ENCODE measurements at regions of chr10 and their contacts with region 1.

Region 1: DNA sequence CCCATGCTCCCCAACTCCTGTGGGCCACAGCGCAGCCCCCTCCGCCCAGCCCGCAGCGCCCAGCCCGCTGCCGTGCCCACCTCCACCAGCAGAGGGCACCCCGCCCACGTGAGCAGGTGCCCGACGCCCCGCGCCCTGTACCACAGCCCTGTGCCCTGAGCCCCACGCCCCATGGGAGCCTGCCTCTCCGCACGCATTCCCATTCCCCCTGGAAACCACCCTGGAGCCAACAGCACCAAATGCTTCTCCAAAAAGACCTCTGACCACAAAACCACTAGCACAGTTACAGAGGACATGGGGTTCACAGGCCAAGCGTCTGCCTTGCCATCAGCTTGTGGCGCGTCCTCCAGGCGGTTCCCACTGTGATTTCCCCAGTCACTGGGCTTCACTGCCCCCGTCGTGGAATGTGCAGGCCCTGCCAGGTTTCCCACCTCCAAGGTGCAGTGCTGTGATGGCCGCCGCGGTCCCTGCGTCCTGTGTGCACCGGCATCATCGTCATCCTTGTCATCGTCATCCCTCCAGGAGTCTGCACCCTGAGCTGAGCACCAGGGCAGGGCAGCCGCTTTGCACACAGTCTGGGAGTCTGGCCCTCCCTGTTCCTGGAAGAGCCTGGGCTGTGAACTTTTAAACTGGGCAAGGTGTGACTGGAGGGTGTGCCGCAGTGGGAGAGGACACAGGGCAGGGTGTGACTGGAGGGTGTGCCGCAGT is 61.7 kb downstream of the PWWP2B start:
- DNase-seq: peak; percentile 95
- H3K4me3 ChIP-seq: no peak overlapping the region; a peak in 1 of 4 replicates
- H3K27ac ChIP-seq: no peak overlapping the region
- H3K4me1 ChIP-seq: peaks cover 0 to under 1% of the 10 kb centered on the region in 2 experiments; a peak in 1 of 4 replicates
- H3K27me3 ChIP-seq: no peaks in the 10 kb centered on the region
- CTCF ChIP-seq: peak; percentile 92
- EP300 ChIP-seq: no peak
- RAD21 ChIP-seq: peak; percentile 90

Region 2: DNA sequence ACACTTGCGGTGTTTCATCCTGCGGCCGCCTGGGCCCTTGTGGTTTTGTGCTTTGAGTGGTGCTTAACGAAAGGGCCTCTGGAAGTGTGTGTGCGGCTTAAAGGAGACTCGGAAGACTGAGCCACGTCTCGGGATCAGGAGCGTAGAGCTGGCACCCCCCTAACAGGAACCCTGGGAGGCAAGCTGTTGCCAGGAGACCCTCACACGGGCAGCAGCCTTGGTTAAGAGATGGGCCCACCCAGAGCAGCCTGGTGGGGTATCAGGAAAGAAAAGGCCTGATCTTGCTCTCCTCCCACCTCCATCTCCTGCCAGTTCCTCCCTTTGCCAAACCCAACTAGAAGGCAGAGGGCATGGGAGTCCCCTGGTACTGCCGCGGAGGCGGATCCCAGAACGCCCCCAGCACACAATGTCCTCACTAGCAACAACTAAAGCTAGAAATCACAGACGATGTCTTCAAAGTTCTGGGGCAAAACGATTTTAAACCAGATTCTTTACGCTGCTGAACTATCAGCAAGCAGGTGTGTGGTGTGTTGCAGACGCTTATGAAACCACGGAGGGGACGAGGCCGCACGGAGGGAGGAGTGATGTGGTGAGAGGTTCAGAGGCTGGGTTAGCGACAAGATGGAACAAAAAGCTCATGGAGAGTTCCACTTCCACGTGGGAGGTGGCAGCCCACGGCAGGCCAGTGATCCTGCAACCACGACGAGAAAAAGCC is 11.8 kb after region 1 on chr10:
- CTCF ChIA-PET with region 1: interaction called, 11 read pairs
- POLR2A ChIA-PET with region 1: no interaction called
- DNase-seq: no peak
- H3K4me3 ChIP-seq: no peak overlapping the region
- H3K27ac ChIP-seq: no peak overlapping the region
- H3K4me1 ChIP-seq: no peaks in the 10 kb centered on the region; a peak in 1 of 4 replicates
- H3K27me3 ChIP-seq: no peaks in the 10 kb centered on the region
- CTCF ChIP-seq: no peak
- EP300 ChIP-seq: no peak
- RAD21 ChIP-seq: no peak

Region 3: DNA sequence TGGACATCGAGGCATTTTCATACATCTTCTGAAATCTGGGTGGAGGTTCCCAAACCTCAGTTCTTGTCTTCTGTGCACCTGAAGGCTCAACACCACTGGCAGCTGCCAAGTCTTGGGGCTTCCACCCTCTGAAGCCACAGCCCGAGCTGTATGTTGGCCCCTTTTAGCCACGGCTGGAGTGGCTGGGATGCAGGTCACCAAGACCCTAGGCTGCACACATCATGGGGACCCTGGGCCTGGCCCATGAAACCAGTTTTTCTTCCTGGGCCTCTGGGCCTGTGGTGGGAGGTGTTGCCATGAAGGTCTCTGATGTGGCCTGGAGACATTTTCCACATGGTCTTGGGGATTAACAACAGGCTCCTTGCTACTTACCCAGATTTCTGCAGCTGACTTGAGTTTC is 141.0 kb after region 1 on chr10:
- CTCF ChIA-PET with region 1: no interaction called
- POLR2A ChIA-PET with region 1: no interaction called
- DNase-seq: no peak
- H3K4me3 ChIP-seq: no peak overlapping the region
- H3K27ac ChIP-seq: no peak overlapping the region
- H3K4me1 ChIP-seq: no peaks in the 10 kb centered on the region; a peak in 1 of 4 replicates
- H3K27me3 ChIP-seq: no peaks in the 10 kb centered on the region
- CTCF ChIP-seq: no peak
- EP300 ChIP-seq: no peak
- RAD21 ChIP-seq: no peak

Region 4: GRCh38 chr10:132637477-132638129 is 178.9 kb after region 1 on chr10:
- CTCF ChIA-PET with region 1: interaction called, 39 read pairs
- POLR2A ChIA-PET with region 1: no interaction called
- DNase-seq: peak; percentile 89
- H3K4me3 ChIP-seq: peak overlapping the region in 1 of 2 experiments; percentile 18; a peak in 2 of 4 replicates
- H3K27ac ChIP-seq: no peak overlapping the region
- H3K4me1 ChIP-seq: peaks cover 0 to 7% of the 10 kb centered on the region in 2 experiments; a peak in 1 of 4 replicates
- H3K27me3 ChIP-seq: no peaks in the 10 kb centered on the region
- CTCF ChIP-seq: peak; percentile 83
- EP300 ChIP-seq: no peak
- RAD21 ChIP-seq: peak; percentile 97